ENCODE measurements at regions of chr5 and their contacts with region 1.

Region 1: GRCh38 chr5:10133830-10134229 is 115.9 kb downstream of the ATPSCKMT start:
- DNase-seq: no peak
- ATAC-seq: peak; percentile 57 to 62; a peak in 5 of 6 replicates
- H3K4me3 ChIP-seq: no peak overlapping the region
- H3K27ac ChIP-seq: no peak overlapping the region
- H3K4me1 ChIP-seq: no peaks in the 10 kb centered on the region
- CTCF ChIP-seq: 0 out of 3 replicates have a peak, but pooled peaks have one; percentile 9
- EP300 ChIP-seq: no peak
- POLR2A ChIP-seq: no peak
- RAD21 ChIP-seq: peak in 1 of 2 experiments; percentile 40; a peak in 1 of 5 replicates

Region 2: GRCh38 chr5:9850456-9850855 is 283.4 kb before region 1 on chr5:
- CTCF ChIA-PET with region 1: interaction called, 11 read pairs
- POLR2A ChIA-PET with region 1: no interaction called
- DNase-seq: no peak
- ATAC-seq: no peak
- H3K4me3 ChIP-seq: no peak overlapping the region
- H3K27ac ChIP-seq: no peak overlapping the region
- H3K4me1 ChIP-seq: no peaks in the 10 kb centered on the region
- CTCF ChIP-seq: no peak
- EP300 ChIP-seq: no peak
- POLR2A ChIP-seq: no peak
- RAD21 ChIP-seq: no peak

Region 3: GRCh38 chr5:10077791-10078545 is 55.9 kb before region 1 on chr5:
- CTCF ChIA-PET with region 1: no interaction called
- POLR2A ChIA-PET with region 1: no interaction called
- DNase-seq: no peak
- ATAC-seq: no peak
- H3K4me3 ChIP-seq: no peak overlapping the region
- H3K27ac ChIP-seq: no peak overlapping the region
- H3K4me1 ChIP-seq: no peaks in the 10 kb centered on the region
- CTCF ChIP-seq: no peak
- EP300 ChIP-seq: no peak
- POLR2A ChIP-seq: no peak
- RAD21 ChIP-seq: no peak

Region 4: GRCh38 chr5:10111571-10111970 is 22.3 kb before region 1 on chr5:
- CTCF ChIA-PET with region 1: no interaction called
- POLR2A ChIA-PET with region 1: no interaction called
- DNase-seq: peak in 1 of 2 experiments; percentile 35
- ATAC-seq: peak; percentile 60 to 83; a peak in 4 of 6 replicates
- H3K4me3 ChIP-seq: no peak overlapping the region
- H3K27ac ChIP-seq: no peak overlapping the region
- H3K4me1 ChIP-seq: no peaks in the 10 kb centered on the region
- CTCF ChIP-seq: 0 out of 3 replicates have a peak, but pooled peaks have one; percentile 11
- EP300 ChIP-seq: no peak
- POLR2A ChIP-seq: no peak
- RAD21 ChIP-seq: peak in 1 of 2 experiments; percentile 43; a peak in 2 of 5 replicates

Region 5: DNA sequence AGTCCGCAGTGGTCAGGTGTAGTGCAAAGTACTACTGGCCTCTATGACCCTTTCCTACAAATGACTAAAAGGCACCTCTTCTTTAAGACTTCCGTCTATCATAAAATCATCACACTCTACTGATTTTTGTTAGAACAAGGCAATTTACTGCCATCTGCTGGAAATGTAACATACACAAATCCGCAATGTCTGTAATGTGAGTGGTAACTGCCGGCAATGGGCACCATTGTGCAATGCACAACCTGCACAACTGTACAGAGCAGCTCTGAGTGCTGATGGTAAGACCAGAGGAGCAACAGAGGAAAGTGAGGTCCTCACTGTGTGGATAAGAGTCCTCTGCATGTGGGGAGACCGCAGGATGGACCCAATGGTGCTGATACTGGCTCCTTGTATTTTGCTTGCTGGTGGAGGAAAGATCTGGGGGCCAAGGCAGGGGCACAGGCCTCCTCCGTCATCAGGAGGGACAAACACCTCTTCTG is 12.1 kb after region 1 on chr5:
- CTCF ChIA-PET with region 1: interaction called, 17 read pairs
- POLR2A ChIA-PET with region 1: no interaction called
- DNase-seq: peak; percentile 18 to 66
- ATAC-seq: peak; percentile 87 to 96
- H3K4me3 ChIP-seq: no peak overlapping the region
- H3K27ac ChIP-seq: no peak overlapping the region
- H3K4me1 ChIP-seq: no peaks in the 10 kb centered on the region
- CTCF ChIP-seq: peak; percentile 61
- EP300 ChIP-seq: no peak
- POLR2A ChIP-seq: no peak
- RAD21 ChIP-seq: peak; percentile 69 to 76